ENCODE measurements at regions of chr10 and their contacts with region 1.

Region 1: DNA sequence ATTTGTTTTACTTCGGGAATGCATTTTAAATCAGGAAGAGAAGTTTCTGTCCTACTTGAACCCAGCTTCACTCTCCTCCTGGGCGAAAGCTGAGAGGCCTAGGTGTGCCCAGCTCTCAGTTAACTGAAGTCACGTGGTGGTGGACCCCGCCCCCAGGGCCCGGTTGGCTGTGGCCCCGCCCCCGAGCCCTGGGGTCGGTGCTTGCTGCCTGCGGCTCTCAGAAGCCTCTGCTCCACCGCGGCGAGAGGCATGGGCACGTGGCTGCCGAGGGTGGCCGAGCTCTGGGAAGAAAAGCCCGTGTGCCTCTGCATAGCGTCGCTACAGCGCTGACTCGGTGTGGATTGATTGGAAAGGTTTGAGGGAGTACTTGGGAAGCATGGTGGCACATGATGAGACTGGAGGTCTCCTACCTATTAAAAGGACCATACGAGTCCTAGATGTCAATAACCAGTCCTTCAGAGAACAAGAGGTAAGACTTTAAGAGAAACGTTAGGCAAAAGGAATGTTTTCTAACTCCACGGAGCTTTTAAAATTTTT is 34.1 kb downstream of the NET1 start:
- DNase-seq: peak; percentile 74
- H3K4me3 Mint-ChIP-seq: peak overlapping the region; percentile 65
- H3K27ac Mint-ChIP-seq: peak overlapping the region; percentile 3
- H3K4me1 Mint-ChIP-seq: peaks cover 45% of the 10 kb centered on the region
- H3K27me3 Mint-ChIP-seq: no peaks in the 10 kb centered on the region

Region 2: DNA sequence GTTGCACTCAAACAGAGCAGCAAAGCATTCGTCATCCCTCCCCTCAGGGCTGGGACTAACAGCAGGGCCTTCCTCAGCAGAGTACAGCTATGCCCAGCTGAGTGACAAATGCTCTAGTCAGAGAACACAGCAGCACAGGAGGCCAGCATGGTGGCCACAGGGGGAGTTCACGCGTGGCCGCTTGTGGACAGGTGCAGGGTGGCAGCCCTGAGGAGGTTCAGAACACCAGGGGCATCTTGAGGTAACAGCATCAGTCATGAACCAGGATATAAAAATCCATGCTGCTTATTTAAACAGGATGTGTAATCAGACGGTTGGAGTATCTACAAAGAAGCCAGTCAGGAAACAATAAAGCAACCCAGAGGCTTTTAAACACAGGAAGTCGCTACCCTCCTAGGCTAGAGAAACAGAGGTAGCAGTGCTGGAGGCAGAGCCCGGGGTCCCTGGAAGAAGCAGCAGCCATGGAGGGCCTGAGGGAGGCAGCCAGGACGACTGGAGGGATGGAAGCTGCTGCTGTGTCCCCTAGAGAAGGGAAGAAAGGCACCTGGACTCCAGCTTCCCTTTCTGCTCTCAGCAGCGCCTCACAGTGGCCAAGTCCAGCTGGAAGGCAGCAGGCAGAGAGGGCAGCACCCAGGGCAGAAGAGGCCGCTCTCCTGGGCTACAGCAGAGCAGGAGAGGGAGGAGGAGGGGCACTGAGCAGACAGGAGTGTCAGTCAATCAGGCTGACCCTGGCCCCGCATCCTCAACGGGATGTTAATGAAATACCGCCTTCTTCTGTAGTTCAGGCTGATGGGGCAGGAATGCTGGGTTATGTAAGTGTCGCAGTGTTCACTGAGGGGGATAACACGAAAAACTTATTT is 152.5 kb before region 1 on chr10:
- CTCF ChIA-PET with region 1: interaction called, 3 read pairs
- POLR2A ChIA-PET with region 1: no interaction called
- intact Hi-C with region 1: loop called (anchors 5 kb)
- DNase-seq: peak; percentile 91
- H3K4me3 Mint-ChIP-seq: peak overlapping the region; percentile 86
- H3K27ac Mint-ChIP-seq: peak overlapping the region; percentile 95
- H3K4me1 Mint-ChIP-seq: peaks cover 79% of the 10 kb centered on the region
- H3K27me3 Mint-ChIP-seq: no peaks in the 10 kb centered on the region

Region 3: DNA sequence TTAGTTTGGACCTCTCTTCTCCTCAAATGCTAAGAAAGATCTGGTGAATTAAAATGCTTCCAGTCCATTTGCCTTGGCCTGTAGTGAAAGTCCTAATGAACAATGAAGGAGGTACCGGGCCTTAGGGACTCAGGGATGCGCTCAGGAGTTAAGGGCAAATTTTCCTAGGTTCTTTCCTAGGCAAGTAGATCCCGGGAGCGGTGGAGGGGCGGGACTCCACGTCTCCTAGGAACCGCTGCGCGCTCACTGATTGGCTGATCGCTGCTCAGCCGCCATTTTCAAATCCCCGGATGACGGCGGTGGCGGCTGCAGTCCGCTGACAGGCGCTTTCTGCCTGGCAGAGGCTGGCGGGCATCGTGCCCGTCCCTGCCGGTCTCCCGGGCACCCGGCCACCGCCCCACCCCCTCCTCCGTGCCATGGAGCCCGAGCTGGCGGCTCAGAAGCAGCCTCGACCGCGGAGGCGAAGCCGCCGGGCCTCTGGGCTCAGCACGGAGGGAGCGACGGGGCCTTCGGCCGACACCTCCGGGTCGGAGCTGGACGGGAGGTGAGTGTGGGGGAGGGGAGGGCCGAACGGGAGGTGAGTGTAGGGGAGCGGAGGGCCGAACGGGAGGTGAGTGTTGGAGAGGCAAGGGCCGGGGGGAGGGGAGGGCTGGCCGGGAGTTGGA is 34.0 kb before region 1 on chr10 and contains the start of gene NET1:
- CTCF ChIA-PET with region 1: interaction called, 3 read pairs
- POLR2A ChIA-PET with region 1: no interaction called
- intact Hi-C with region 1: loop called (anchors 2 kb)
- DNase-seq: peak; percentile 84
- H3K4me3 Mint-ChIP-seq: peak within 1 kb of the TSS; percentile 78
- H3K27ac Mint-ChIP-seq: peak within 1 kb of the TSS; percentile 20
- H3K4me1 Mint-ChIP-seq: peaks cover 4% of the 10 kb centered on the region
- H3K27me3 Mint-ChIP-seq: peaks cover 16% of the 10 kb centered on the region
- total RNA-seq, gene NET1: 25.3 to 25.6 TPM

Region 4: GRCh38 chr10:5524641-5525560 is 78.4 kb after region 1 on chr10 and contains the start of gene CALML3:
- CTCF ChIA-PET with region 1: no interaction called
- POLR2A ChIA-PET with region 1: no interaction called
- intact Hi-C with region 1: no loop called
- DNase-seq: no peak
- H3K4me3 Mint-ChIP-seq: no peak within 1 kb of the TSS
- H3K27ac Mint-ChIP-seq: no peak within 1 kb of the TSS
- H3K4me1 Mint-ChIP-seq: no peaks in the 10 kb centered on the region
- H3K27me3 Mint-ChIP-seq: peaks cover under 1% of the 10 kb centered on the region
- total RNA-seq, gene CALML3: not detected

Region 5: DNA sequence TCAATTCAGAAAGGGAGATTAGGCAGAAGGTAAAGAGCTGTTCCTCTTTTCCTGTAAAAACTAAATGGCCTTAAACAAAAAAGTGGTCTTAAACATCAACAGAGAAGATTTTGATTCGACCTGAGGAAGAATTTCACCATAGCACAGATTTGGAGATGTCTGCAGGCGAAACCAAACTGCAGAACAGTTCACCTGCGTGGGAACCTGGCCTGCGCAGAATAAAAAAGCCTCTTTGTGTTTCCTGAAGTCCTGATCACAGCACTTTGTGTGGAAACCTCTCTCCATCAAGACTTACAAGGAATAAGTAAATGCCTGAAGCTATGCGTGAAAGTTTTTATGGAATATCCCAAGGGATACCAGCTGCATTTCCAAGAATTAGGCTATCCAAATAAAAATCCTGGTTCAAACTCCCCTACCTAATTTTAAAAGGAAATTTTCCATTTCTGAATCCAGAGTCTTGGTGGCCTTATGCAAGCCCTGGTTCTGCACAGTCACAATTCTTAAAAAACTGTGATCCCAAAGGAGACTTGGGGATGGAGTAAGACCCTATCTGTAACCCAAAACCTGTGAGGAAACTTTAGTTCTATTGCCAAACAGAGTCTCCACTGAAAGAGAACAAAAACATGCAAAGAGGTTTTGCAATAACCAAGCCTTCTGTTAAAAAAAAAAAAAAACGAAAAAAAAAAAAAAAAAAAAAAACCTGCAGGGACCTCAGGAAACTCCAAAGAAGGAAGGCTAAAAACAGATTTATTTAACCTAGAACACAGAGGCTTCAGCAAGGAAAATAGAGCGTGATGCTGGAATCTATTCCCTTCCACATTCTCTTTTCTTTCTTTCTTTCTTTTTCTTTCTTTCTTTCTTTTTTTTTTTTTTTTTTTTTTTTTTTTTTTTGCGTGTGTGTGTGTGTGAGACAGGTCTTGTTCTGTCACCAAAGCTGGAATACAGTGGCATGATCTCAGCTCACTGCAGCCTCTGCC is 88.7 kb after region 1 on chr10:
- CTCF ChIA-PET with region 1: no interaction called
- POLR2A ChIA-PET with region 1: no interaction called
- intact Hi-C with region 1: no loop called
- DNase-seq: no peak
- H3K4me3 Mint-ChIP-seq: no peak overlapping the region
- H3K27ac Mint-ChIP-seq: no peak overlapping the region
- H3K4me1 Mint-ChIP-seq: no peaks in the 10 kb centered on the region
- H3K27me3 Mint-ChIP-seq: no peaks in the 10 kb centered on the region

Region 6: DNA sequence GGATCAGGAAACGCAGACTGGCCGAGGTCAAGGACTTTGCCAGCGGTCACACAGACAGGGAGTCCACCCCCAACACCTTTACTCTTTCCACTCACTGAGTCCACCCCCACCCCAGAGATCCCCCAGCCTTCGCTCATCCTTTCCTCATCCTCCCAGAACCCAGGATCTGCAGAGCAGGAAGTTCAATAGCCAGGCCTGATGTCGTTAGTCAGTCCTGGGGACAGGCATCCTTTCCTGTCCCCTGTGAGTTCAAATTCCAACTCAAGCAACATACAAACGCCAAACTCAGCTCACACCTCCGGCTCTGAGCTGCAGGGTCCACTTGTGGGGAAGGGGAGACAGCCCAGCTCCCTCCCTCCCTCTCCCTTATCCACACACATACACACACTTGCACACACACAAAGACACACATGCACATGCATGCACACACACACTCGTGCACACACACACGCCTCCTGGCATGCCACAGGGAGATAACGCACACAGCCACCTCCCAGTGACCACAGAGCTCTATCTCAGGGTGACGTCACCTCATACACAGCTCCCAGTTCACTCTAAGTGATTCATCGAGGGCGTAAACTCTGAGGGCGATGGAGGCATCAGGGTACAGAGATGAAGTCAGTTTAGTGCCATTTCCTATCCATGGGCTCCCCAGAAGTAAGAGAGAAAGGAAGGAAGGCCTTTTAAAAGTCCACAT is 102.2 kb after region 1 on chr10:
- CTCF ChIA-PET with region 1: interaction called, 9 read pairs
- POLR2A ChIA-PET with region 1: no interaction called
- intact Hi-C with region 1: loop called (anchors 2 kb)
- DNase-seq: peak; percentile 78
- H3K4me3 Mint-ChIP-seq: no peak overlapping the region
- H3K27ac Mint-ChIP-seq: no peak overlapping the region
- H3K4me1 Mint-ChIP-seq: peaks cover 27% of the 10 kb centered on the region
- H3K27me3 Mint-ChIP-seq: no peaks in the 10 kb centered on the region

Region 7: DNA sequence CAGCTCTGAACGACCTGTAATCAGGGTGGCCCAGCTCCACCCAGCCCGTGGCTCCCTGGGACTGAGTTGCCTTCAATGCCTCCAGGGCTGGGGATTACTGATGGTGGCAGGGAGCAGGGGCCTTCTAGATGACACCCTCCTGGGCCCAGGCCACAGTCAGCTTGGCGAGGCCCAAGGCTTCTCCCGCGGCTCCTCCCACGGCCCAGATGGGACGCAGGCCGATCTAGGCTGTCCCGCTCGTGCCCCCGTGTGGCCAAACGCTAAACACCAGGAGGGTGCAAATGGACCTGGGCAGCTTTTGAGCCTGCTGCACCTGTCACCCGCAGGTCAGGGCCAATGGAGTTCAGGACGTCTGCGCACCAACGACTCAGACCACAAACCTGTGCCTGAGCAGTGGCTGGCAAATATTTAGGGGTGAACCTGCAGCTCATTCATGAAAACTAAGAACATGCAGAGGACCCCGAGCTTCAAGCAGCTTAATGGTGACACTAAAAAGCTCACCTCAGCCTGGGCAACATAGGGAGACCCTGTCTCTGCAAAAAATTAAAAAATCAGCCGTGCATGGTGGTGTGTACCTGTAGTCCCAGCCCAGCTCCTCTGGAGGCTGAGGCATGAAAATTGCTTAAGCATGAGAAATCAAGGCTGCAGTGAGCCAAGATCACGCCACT is 176.8 kb after region 1 on chr10:
- CTCF ChIA-PET with region 1: interaction called, 237 read pairs
- POLR2A ChIA-PET with region 1: interaction called, 4 read pairs
- intact Hi-C with region 1: loop called (anchors 1 kb)
- DNase-seq: peak; percentile 90
- H3K4me3 Mint-ChIP-seq: no peak overlapping the region
- H3K27ac Mint-ChIP-seq: no peak overlapping the region
- H3K4me1 Mint-ChIP-seq: peaks cover 10% of the 10 kb centered on the region
- H3K27me3 Mint-ChIP-seq: peaks cover 1% of the 10 kb centered on the region

Region 8: GRCh38 chr10:5684318-5684970 is 238.0 kb after region 1 on chr10 and contains the start of gene TASOR2:
- CTCF ChIA-PET with region 1: no interaction called
- POLR2A ChIA-PET with region 1: no interaction called
- intact Hi-C with region 1: loop called (anchors 2 kb)
- DNase-seq: peak; percentile 98
- H3K4me3 Mint-ChIP-seq: peak within 1 kb of the TSS; percentile 98
- H3K27ac Mint-ChIP-seq: peak within 1 kb of the TSS; percentile 94
- H3K4me1 Mint-ChIP-seq: peaks cover 56% of the 10 kb centered on the region
- H3K27me3 Mint-ChIP-seq: peaks cover 3% of the 10 kb centered on the region
- total RNA-seq, gene TASOR2: 41.8 to 43.8 TPM